ENCODE measurements at regions of chr5 and their contacts with region 1.

Region 1: DNA sequence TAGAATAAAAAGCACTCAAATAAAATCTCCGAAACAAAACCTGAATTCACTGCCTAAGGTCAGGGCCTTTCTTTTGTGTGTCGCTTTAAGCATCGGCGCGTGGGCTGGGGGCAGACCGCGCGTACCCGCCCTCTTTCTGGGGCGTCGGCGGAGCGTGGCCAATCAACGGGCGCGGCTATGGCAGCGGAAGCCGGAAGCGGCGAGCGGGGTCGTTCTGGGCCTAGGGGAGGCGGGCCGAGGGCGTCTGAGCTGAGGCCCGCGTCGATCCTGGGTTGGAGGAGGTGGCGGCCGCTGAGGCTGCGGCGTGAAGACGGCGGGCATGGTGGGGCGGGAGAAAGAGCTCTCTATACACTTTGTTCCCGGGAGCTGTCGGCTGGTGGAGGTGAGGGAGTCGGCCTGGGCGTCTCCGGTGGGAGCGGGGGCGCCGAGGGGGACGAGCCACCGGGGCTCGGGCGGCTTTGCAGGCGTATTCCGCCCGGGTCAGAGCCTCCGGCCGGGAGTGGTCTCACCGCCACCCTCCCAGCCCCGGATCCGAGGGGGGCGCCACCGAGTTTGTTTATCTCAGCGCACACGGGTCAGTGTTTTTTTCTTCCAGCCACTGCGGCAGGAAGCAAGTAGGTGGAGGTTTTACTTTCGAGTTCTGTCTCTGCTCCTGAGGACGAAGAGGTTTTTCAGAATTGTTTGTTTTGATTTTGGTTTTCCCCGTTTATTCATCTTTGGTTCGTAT is at the start of gene MAT2B:
- DNase-seq: peak; percentile 99
- H3K4me3 Mint-ChIP-seq: peak within 1 kb of the TSS; percentile 93
- H3K27ac Mint-ChIP-seq: peak within 1 kb of the TSS; percentile 97
- H3K4me1 Mint-ChIP-seq: peaks cover 43% of the 10 kb centered on the region
- H3K27me3 Mint-ChIP-seq: peaks cover 2% of the 10 kb centered on the region
- total RNA-seq, gene MAT2B: 104 and 105 TPM in 2 replicates

Region 2: GRCh38 chr5:163306421-163306820 is 199.1 kb before region 1 on chr5:
- intact Hi-C with region 1: loop called (anchors 5 kb)
- DNase-seq: no peak
- H3K4me3 Mint-ChIP-seq: no peak overlapping the region
- H3K27ac Mint-ChIP-seq: no peak overlapping the region
- H3K4me1 Mint-ChIP-seq: peaks cover 9% of the 10 kb centered on the region
- H3K27me3 Mint-ChIP-seq: peaks cover 6% of the 10 kb centered on the region

Region 3: DNA sequence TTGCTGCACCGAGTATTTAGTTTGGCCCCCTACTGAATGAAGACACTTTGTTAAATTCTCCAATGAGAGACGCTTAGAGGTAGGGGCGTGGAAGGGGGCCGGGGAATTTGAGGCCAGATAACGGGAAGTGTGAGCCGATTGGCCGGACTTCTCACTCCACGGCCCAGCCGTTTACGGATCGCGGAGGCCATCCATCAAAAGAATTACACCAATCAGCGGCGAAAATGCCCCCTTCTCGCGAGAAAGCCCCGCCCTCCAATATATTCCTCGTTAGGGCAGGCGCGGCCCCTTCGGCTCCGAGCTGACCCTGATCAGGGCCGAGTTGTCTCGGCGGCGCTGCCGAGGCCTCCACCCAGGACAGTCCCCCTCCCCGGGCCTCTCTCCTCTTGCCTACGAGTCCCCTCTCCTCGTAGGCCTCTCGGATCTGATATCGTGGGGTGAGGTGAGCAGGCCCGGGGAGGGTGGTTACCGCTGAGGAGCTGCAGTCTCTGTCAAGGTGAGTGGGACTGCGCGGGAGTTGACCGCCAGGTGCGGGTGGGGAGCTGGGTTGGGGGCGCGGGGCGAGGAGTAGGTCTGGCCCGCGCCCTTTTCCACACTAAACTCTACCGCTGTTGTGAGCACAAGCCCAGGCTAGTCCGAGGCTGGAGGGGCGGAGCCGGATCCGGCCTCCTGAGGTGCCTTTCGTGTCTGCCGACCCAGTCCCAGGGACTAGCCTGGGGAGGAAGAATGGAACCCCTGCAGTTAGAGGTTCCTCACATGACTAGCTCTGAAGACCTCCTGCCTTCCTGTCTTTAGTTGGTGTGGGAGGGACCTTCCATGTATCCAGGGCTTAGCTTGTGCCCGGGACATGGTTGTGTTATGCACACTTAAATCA is 68.0 kb before region 1 on chr5 and contains the start of gene CCNG1:
- intact Hi-C with region 1: loop called (anchors 1 kb)
- DNase-seq: peak; percentile 97
- H3K4me3 Mint-ChIP-seq: peak within 1 kb of the TSS; percentile 93
- H3K27ac Mint-ChIP-seq: peak within 1 kb of the TSS; percentile 92
- H3K4me1 Mint-ChIP-seq: peaks cover 47% of the 10 kb centered on the region
- H3K27me3 Mint-ChIP-seq: peaks cover 9% of the 10 kb centered on the region
- total RNA-seq, gene CCNG1: 72.5 and 75.1 TPM in 2 replicates

Region 4: GRCh38 chr5:163459922-163460766 is 45.4 kb before region 1 on chr5 and contains the starts of genes HMMR and NUDCD2:
- intact Hi-C with region 1: loop called (anchors 1 kb)
- DNase-seq: peak; percentile 98
- H3K4me3 Mint-ChIP-seq: peak within 1 kb of the TSS; percentile 90
- H3K27ac Mint-ChIP-seq: peak within 1 kb of the TSS; percentile 99
- H3K4me1 Mint-ChIP-seq: peaks cover 46% of the 10 kb centered on the region
- H3K27me3 Mint-ChIP-seq: no peaks in the 10 kb centered on the region
- total RNA-seq, gene HMMR: 29.1 and 30.8 TPM in 2 replicates
- total RNA-seq, gene NUDCD2: 44.5 and 50.3 TPM in 2 replicates

Region 5: DNA sequence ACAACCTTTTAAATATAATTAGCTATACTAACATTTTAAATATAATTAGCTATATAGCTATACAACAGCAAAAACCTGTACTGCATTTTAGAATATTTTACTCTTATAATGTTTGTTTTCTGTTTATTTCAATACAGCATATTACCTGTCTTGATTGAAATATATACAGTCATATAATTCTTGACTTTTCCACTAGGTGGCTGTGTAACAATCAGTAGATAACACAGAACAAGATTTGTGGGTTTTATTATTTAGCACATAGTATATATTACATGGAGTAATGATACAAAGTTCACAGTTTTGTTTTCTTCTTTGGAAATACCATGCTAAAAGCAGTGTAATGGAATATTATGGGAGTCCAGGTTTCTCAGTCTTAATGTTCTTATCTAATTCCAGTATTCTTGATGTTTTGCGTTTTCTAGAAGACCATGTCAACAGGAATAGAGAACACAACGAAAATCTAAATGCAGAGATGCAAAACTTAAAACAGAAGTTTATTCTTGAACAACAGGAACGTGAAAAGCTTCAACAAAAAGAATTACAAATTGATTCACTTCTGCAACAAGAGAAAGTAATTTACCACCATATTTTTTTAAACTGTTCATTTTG is 31.8 kb before region 1 on chr5:
- intact Hi-C with region 1: loop called (anchors 2 kb)
- DNase-seq: no peak
- H3K4me3 Mint-ChIP-seq: no peak overlapping the region
- H3K27ac Mint-ChIP-seq: no peak overlapping the region
- H3K4me1 Mint-ChIP-seq: peaks cover 10% of the 10 kb centered on the region
- H3K27me3 Mint-ChIP-seq: no peaks in the 10 kb centered on the region

Region 6: DNA sequence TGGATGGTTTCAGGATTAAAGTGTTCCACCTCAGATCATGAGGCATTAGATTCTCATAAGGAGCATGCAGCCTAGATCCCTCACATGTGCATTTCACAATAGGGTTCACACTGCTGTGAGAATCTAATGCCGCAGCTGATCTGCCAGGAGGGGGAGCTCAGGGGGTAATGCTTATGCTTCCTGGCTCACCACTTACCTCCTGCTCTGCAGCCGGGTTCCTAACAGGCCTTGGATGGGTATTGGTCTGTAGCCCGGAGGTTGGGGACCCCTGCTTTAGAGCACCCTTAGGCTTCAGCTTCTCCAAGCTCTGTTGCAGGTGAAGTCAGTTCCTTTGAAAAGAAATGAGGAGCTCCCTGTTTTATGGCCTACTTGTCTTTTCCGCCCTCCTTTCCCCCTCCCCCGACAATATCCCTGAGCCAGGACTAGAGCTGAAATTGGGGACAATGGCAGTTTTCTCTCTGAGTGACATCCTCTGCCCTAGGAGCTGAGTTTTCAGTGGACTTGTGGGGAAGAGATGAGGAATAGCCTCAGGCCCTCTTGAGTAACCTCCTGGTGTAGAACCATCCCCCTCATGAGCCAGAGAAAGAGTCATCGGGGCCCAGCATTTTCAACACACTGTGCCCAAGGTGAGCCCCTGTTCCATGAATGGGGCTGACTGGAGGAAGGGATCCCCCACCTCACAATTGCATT is 16.3 kb before region 1 on chr5:
- intact Hi-C with region 1: no loop called
- DNase-seq: peak; percentile 73
- H3K4me3 Mint-ChIP-seq: no peak overlapping the region
- H3K27ac Mint-ChIP-seq: peak overlapping the region; percentile 2
- H3K4me1 Mint-ChIP-seq: peaks cover 4% of the 10 kb centered on the region
- H3K27me3 Mint-ChIP-seq: no peaks in the 10 kb centered on the region

Region 7: DNA sequence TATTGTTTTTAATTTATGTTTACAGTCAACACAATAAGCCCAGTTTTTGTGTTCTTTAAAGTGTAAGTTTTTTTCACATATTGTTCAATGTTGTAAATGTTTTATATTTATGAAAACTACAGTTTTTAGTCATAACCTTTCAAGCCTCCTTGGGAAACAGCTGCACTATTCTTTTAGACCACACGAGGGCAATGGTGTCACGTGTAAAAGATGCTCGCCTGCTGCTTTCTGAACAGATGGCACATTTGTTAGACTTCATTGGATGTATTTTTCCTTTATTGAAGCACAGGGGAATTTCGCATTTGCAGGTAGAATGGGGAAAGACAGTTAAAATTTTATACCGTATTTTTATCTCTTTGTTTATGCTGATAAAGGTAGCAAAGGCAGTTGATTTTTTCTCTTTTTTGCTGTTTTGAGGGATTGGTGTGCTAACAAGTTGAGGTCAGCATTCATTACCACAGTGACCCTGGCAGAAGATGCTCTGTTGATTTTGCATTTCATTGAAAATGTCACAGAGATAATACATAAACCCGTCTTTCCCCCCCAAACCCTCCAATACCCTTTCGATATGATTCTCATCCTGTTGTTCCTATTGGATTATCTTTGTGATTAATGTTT is 58.9 kb after region 1 on chr5:
- intact Hi-C with region 1: loop called (anchors 2 kb)
- DNase-seq: peak; percentile 90
- H3K4me3 Mint-ChIP-seq: no peak overlapping the region
- H3K27ac Mint-ChIP-seq: no peak overlapping the region
- H3K4me1 Mint-ChIP-seq: peaks cover 20% of the 10 kb centered on the region
- H3K27me3 Mint-ChIP-seq: peaks cover 64% of the 10 kb centered on the region

Region 8: DNA sequence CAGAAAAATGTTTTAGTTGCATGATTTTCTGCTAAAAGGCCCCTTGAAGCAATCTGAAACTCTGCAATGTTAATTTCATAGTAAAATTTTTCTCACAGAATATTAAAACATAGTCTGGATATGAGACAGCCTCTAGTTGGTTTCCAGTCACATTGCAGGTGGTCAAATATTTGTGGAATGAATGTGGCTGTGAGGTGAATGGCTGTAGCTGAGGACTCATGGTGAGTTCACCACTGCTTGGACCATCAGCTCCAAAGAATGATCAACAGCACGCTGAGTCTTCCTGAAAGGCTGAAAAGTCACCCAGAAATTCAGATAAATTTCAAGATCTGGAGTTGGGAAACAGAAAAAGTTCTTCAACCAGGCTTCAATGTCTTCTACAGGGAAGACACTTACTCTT is 79.7 kb after region 1 on chr5:
- intact Hi-C with region 1: no loop called
- DNase-seq: no peak
- H3K4me3 Mint-ChIP-seq: no peak overlapping the region
- H3K27ac Mint-ChIP-seq: no peak overlapping the region
- H3K4me1 Mint-ChIP-seq: no peaks in the 10 kb centered on the region
- H3K27me3 Mint-ChIP-seq: no peaks in the 10 kb centered on the region

Region 9: DNA sequence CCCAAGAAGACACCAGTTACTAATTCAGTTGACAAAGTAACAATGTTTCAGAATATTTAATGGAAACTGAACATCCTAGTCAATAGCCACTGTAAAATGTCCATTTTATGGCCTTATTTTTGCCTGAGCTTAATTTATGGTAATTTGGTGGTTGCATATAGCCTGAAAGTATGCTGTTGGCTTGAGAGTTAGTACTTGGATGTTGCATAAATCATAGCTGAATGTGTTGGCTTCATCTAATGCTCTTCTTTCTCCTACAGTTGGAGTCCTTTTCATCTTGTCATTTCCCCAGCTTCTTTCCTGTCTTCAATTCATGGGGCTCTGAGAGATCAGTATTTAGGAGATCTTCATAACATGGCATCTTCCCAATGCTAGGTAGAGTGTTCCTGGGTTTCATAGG is 164.5 kb after region 1 on chr5:
- intact Hi-C with region 1: no loop called
- DNase-seq: no peak
- H3K4me3 Mint-ChIP-seq: no peak overlapping the region
- H3K27ac Mint-ChIP-seq: no peak overlapping the region
- H3K4me1 Mint-ChIP-seq: no peaks in the 10 kb centered on the region
- H3K27me3 Mint-ChIP-seq: no peaks in the 10 kb centered on the region